Activated CD4-positive, alpha-beta memory T cell treated with anti-CD3 and anti-CD28 coated beads for 36 hours (primary cell): ENCODE measurements at regions of chr9 and their contacts with region 1.

Region 1: DNA sequence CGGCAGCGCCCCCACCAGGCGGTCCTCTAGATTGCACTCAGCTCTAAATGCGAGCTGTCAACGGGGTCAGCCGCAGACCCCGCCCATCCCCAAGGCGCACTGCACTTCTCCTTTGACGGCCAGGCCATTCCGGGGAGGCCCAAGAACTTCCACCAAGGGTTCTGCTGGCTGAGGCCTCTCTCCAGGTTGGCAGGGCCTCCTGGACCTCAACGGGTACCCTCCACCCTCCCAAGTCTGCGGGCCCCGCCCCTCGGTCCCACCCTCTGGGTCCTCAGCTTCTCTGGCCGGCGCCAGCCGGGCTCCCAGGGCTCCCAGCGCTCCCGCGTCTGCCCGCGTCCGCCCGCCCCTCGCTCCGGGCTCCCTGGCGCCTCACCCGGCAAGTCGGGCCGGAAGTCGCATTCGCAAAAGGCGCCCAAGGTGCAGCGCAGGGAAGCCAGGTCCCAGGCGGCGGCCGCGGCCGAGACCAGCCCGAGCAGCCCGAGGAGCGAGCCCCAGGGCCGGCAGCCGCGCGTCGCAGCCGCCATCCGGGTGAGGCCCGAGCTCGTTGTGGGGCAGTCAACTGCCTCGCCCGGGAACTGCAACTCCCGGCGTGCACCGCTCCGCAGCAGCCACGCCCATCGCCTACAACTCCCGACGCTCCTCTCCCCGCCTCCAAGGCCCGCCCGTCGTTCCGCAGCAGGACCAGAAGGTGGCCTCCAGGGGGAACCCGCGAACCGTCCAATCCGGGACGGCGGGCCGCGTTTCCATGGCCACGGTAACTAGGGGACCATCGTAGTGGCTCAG is at the start of gene TOR2A:
- DNase-seq: peak; percentile 99
- H3K4me3 Mint-ChIP-seq: peak within 1 kb of the TSS; percentile 74
- H3K27ac Mint-ChIP-seq: peak within 1 kb of the TSS; percentile 76
- H3K4me1 Mint-ChIP-seq: peaks cover 12% of the 10 kb centered on the region
- H3K27me3 Mint-ChIP-seq: no peaks in the 10 kb centered on the region
- total RNA-seq, gene TOR2A: 12.7 to 16.2 TPM

Region 2: DNA sequence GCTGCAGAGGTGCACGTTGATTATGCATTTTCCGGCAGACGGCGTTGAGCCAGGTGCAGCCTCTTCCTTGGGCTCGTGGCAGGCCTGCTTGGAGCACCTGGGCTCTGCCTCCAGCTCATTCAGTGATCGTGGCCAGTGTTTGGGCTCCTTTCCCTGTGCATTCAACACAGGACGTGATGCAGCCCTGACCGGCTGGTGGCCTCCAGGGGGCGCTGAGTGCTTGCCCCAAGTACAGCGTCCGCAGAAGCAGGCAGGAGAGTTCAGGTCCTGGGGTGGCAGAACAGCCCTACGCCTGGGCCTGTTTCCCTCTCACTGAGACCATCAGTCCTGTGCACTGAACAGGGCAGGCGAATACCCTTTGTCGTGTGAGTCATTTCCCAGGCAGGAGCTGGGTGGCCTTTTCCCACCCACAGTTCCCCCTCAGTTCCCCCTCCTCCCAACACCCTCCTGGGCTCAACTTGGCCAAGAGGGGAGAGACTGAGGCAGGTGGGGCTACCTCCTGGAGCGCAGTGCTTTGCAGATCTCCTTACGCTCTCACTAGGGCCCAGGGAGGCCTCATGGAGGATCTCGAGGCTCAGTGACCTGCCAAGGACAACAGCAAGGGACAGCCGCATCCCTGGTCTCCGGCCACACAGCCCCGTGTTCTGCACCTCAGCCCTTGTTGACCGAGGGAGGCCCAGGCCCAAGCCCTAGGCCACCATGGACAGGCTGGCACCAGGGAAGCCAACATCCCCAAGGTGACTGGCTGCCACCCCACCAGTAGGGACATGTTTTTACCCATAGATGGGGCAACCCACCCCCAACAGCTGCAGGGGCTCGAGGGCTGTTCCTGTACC is 230.8 kb before region 1 on chr9:
- CTCF ChIA-PET with region 1: interaction called, 13 read pairs
- POLR2A ChIA-PET with region 1: interaction called, 4 read pairs
- intact Hi-C with region 1: loop called (anchors 2 kb)
- DNase-seq: peak; percentile 86
- H3K4me3 Mint-ChIP-seq: no peak overlapping the region
- H3K27ac Mint-ChIP-seq: no peak overlapping the region
- H3K4me1 Mint-ChIP-seq: no peaks in the 10 kb centered on the region
- H3K27me3 Mint-ChIP-seq: no peaks in the 10 kb centered on the region

Region 3: DNA sequence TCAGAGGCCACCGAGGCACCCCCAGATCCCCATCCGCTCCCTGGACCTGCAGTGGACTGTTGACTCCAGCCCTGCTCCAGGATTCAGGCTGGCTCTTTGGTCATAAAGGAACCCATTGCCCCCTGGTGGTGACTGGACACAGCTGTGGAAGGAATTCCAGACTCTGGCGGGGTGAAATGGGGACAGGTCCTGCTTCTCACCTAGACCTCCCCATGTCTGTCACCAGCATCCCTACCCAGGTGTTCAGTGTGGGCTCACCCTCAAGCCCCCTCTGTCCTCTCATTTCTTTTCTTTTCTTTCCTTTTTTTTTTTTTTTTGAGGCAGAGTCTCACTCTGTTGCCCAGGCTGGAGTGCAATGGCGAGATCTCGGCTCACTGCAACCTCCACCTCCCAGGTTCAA is 148.4 kb before region 1 on chr9:
- CTCF ChIA-PET with region 1: interaction called, 46 read pairs
- POLR2A ChIA-PET with region 1: no interaction called
- intact Hi-C with region 1: loop called (anchors 1 kb)
- DNase-seq: peak; percentile 71
- H3K4me3 Mint-ChIP-seq: no peak overlapping the region
- H3K27ac Mint-ChIP-seq: no peak overlapping the region
- H3K4me1 Mint-ChIP-seq: peaks cover 9% of the 10 kb centered on the region
- H3K27me3 Mint-ChIP-seq: peaks cover 6% of the 10 kb centered on the region

Region 4: DNA sequence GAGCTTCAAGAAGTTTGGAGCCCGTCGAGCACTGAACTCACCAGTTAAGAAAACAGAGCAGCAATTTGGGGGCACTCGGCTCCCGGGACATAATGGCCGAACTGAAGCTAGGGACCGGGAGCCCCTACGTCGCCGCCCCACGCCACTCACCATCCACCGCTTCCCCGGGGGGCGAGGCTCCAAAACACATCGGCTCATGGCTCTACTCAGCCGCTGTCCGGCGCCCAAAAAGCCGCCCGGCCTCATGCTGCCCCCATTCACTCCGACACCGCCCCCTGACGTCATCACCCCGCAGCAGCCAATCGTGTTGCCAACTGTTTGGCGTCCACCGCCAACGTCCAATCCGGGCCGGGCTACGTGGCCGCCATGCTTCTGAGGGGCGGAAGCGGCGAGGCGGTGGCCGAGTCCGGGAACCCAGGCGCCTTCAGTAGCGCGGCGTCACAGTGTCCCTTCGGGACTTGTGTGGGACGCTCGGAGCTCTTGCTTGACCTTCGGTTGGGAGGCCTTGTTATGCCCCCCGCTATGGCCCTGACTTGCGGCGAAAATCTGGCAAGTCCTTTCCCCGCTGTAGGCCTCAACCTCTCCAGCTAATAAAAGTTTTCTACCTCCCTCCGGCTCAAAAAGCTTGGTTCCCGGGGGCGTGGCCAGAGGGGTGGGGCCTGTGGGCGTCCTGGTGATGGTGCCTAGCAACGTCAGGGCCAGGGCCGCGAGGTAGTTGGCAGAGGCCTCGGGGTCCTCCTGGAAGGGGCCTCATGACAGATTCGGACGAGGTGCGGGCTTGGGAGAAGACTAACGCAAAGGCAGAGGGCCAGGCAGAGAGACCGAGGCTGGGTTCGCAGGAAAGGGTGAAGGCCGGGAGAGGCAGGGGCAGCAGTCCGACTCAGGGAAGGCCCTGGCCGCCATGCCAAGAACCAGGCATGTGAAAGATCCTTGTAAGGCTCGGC is 19.3 kb before region 1 on chr9 and contains the starts of genes PTRH1 and TTC16:
- CTCF ChIA-PET with region 1: interaction called, 41 read pairs
- POLR2A ChIA-PET with region 1: interaction called, 6 read pairs
- intact Hi-C with region 1: loop called (anchors 1 kb)
- DNase-seq: peak; percentile 98
- H3K4me3 Mint-ChIP-seq: peak within 1 kb of the TSS; percentile 90
- H3K27ac Mint-ChIP-seq: peak within 1 kb of the TSS; percentile 74
- H3K4me1 Mint-ChIP-seq: peaks cover 29% of the 10 kb centered on the region
- H3K27me3 Mint-ChIP-seq: no peaks in the 10 kb centered on the region
- total RNA-seq, gene PTRH1: 20.9 to 22.7 TPM
- total RNA-seq, gene TTC16: 0.61 to 0.69 TPM

Region 5: GRCh38 chr9:127785023-127785932 is 50.3 kb after region 1 on chr9:
- CTCF ChIA-PET with region 1: interaction called, 56 read pairs
- POLR2A ChIA-PET with region 1: interaction called, 13 read pairs
- intact Hi-C with region 1: loop called (anchors 1 kb)
- DNase-seq: peak; percentile 93
- H3K4me3 Mint-ChIP-seq: peak overlapping the region; percentile 77
- H3K27ac Mint-ChIP-seq: peak overlapping the region; percentile 96
- H3K4me1 Mint-ChIP-seq: peaks cover 76% of the 10 kb centered on the region
- H3K27me3 Mint-ChIP-seq: no peaks in the 10 kb centered on the region

Region 6: GRCh38 chr9:127916665-127917613 is 182.0 kb after region 1 on chr9 and contains the start of gene ST6GALNAC4:
- CTCF ChIA-PET with region 1: interaction called, 57 read pairs
- POLR2A ChIA-PET with region 1: interaction called, 8 read pairs
- intact Hi-C with region 1: loop called (anchors 1 kb)
- DNase-seq: peak; percentile 98
- H3K4me3 Mint-ChIP-seq: peak within 1 kb of the TSS; percentile 77
- H3K27ac Mint-ChIP-seq: peak within 1 kb of the TSS; percentile 54
- H3K4me1 Mint-ChIP-seq: peaks cover 43% of the 10 kb centered on the region
- H3K27me3 Mint-ChIP-seq: no peaks in the 10 kb centered on the region
- total RNA-seq, gene ST6GALNAC4: 21.2 to 23.5 TPM